Endothelial cell of umbilical vein (primary cell): ENCODE measurements at regions of chr9 and their contacts with region 1.

Region 1: GRCh38 chr9:81223986-81224763 is 465.2 kb downstream of the TLE1 start:
- DNase-seq: no peak
- H3K4me3 ChIP-seq: no peak overlapping the region
- H3K27ac ChIP-seq: no peak overlapping the region
- H3K4me1 ChIP-seq: no peaks in the 10 kb centered on the region
- H3K27me3 ChIP-seq: no peaks in the 10 kb centered on the region
- CTCF ChIP-seq: no peak
- POLR2A ChIP-seq: no peak

Region 2: DNA sequence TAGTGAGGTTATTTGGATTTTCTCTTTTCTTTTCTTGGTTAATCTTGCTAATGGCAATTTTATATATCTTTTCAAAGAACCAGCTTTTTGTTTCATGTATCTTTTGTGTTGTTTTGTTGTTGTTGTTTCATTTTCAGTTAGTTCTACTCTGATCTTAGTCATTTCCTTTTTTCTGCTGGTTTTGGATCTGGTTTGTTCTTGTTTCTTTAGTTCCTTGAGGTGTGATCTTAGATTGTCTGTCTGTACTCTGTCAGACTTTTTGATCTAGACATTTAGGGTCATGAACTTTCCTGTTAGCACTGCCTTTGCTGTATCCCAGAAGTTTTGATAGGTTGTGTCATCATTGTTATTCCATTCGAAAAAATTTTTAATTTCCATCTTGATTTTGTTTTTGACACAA is 65.4 kb after region 1 on chr9:
- CTCF ChIA-PET with region 1: no interaction called
- POLR2A ChIA-PET with region 1: no interaction called
- dilution Hi-C with region 1: no loop called
- intact Hi-C with region 1: loop called (anchors 10 kb)
- DNase-seq: no peak
- H3K4me3 ChIP-seq: no peak overlapping the region
- H3K27ac ChIP-seq: no peak overlapping the region
- H3K4me1 ChIP-seq: no peaks in the 10 kb centered on the region
- H3K27me3 ChIP-seq: no peaks in the 10 kb centered on the region
- CTCF ChIP-seq: no peak
- POLR2A ChIP-seq: no peak